IMR-90 (cell line): ENCODE measurements at regions of chr6 and their contacts with region 1.

Region 1: GRCh38 chr6:153872946-153873345 is 166.1 kb upstream of the OPRM1 start:
- DNase-seq: no peak
- ATAC-seq: no peak
- H3K4me3 ChIP-seq: no peak overlapping the region
- H3K27ac ChIP-seq: no peak overlapping the region
- H3K4me1 ChIP-seq: no peaks in the 10 kb centered on the region
- H3K27me3 ChIP-seq: no peaks in the 10 kb centered on the region
- CTCF ChIP-seq: no peak
- POLR2A ChIP-seq: no peak
- RAD21 ChIP-seq: no peak

Region 2: DNA sequence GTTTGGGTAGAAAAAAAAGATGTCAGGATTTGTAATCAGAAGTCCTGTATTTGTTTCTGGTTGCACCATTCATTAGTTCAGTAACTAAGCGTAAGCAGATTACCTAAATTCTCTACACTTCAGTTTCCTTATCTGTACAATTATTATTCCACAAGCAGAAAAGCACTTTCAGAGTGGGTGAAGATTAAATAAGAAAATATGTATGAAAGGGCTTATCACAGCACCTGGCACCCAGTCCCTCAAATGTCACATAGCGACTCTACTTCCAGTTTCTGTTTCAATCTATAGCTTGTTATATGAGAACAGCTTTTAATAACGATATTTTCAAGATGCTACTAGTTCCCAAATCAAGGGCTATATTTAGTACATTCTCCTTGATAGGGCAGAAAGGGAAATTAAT is 773.3 kb before region 1 on chr6:
- CTCF ChIA-PET with region 1: no interaction called
- POLR2A ChIA-PET with region 1: no interaction called
- dilution Hi-C with region 1: no loop called
- in situ Hi-C with region 1: no loop called
- intact Hi-C with region 1: loop called (anchors 5 kb)
- DNase-seq: no peak
- ATAC-seq: no peak
- H3K4me3 ChIP-seq: no peak overlapping the region
- H3K27ac ChIP-seq: no peak overlapping the region
- H3K4me1 ChIP-seq: peaks cover 3% of the 10 kb centered on the region
- H3K27me3 ChIP-seq: no peaks in the 10 kb centered on the region
- CTCF ChIP-seq: no peak
- POLR2A ChIP-seq: no peak
- RAD21 ChIP-seq: no peak

Region 3: GRCh38 chr6:153392156-153392555 is 480.8 kb before region 1 on chr6:
- CTCF ChIA-PET with region 1: no interaction called
- POLR2A ChIA-PET with region 1: no interaction called
- dilution Hi-C with region 1: no loop called
- in situ Hi-C with region 1: no loop called
- intact Hi-C with region 1: no loop called
- DNase-seq: no peak
- ATAC-seq: no peak
- H3K4me3 ChIP-seq: no peak overlapping the region
- H3K27ac ChIP-seq: no peak overlapping the region
- H3K4me1 ChIP-seq: no peaks in the 10 kb centered on the region
- H3K27me3 ChIP-seq: no peaks in the 10 kb centered on the region
- CTCF ChIP-seq: no peak
- POLR2A ChIP-seq: no peak
- RAD21 ChIP-seq: no peak

Region 4: GRCh38 chr6:153831350-153832078 is 41.4 kb before region 1 on chr6:
- CTCF ChIA-PET with region 1: no interaction called
- POLR2A ChIA-PET with region 1: no interaction called
- dilution Hi-C with region 1: no loop called
- in situ Hi-C with region 1: no loop called
- intact Hi-C with region 1: no loop called
- DNase-seq: no peak
- ATAC-seq: no peak
- H3K4me3 ChIP-seq: no peak overlapping the region
- H3K27ac ChIP-seq: no peak overlapping the region
- H3K4me1 ChIP-seq: no peaks in the 10 kb centered on the region
- H3K27me3 ChIP-seq: no peaks in the 10 kb centered on the region
- CTCF ChIP-seq: no peak
- POLR2A ChIP-seq: no peak
- RAD21 ChIP-seq: no peak